ENCODE measurements at regions of chr1 and their contacts with region 1.

Region 1: GRCh38 chr1:203643213-203644045 is 16.8 kb downstream of the ATP2B4 start:
- DNase-seq: no peak
- ATAC-seq: no peak
- H3K4me3 Mint-ChIP-seq: no peak overlapping the region
- H3K27ac Mint-ChIP-seq: no peak overlapping the region
- H3K4me1 Mint-ChIP-seq: peaks cover 8% of the 10 kb centered on the region
- H3K27me3 Mint-ChIP-seq: no peaks in the 10 kb centered on the region
- CTCF ChIP-seq: no peak

Region 2: GRCh38 chr1:203655671-203656070 is 12.2 kb after region 1 on chr1:
- CTCF ChIA-PET with region 1: no interaction called
- POLR2A ChIA-PET with region 1: interaction called, 10 read pairs
- DNase-seq: no peak
- ATAC-seq: no peak
- H3K4me3 Mint-ChIP-seq: no peak overlapping the region
- H3K27ac Mint-ChIP-seq: no peak overlapping the region
- H3K4me1 Mint-ChIP-seq: peaks cover 12% of the 10 kb centered on the region
- H3K27me3 Mint-ChIP-seq: no peaks in the 10 kb centered on the region
- CTCF ChIP-seq: no peak

Measured in WTC11 (cell line).